ENCODE measurements at regions of chr6 and their contacts with region 1.

Region 1: DNA sequence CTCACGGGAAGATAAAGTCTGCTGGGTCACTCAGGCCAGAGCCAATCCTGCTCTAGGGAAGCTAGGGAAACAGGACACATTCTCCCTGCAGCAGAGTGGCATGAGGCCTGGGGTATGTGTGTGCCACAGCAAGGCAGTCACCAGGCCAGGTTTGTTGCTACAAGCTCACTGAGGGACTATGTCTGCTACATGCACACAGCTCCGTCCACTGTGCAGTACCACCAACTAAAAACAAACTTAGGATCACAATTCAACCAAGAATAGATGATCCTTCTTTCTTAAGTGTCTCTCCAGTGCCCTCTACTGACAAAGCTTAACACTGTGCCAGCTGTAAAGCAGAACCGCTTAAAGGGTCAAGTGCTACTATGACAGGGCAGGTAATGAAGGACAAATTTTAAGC is 192.5 kb downstream of the PTPRK start:
- DNase-seq: no peak
- H3K4me3 ChIP-seq: no peak overlapping the region
- H3K27ac ChIP-seq: no peak overlapping the region
- H3K4me1 ChIP-seq: no peaks in the 10 kb centered on the region
- H3K27me3 ChIP-seq: no peaks in the 10 kb centered on the region
- CTCF ChIP-seq: no peak
- POLR2A ChIP-seq: no peak

Region 2: GRCh38 chr6:128316258-128316929 is 11.5 kb before region 1 on chr6:
- intact Hi-C with region 1: loop called (anchors 1 kb)
- DNase-seq: no peak
- H3K4me3 ChIP-seq: no peak overlapping the region
- H3K27ac ChIP-seq: no peak overlapping the region
- H3K4me1 ChIP-seq: no peaks in the 10 kb centered on the region
- H3K27me3 ChIP-seq: no peaks in the 10 kb centered on the region
- CTCF ChIP-seq: no peak
- POLR2A ChIP-seq: no peak

Measured in breast epithelium (tissue), 4 donors.